ENCODE measurements at regions of chr10 and their contacts with region 1.

Region 1: DNA sequence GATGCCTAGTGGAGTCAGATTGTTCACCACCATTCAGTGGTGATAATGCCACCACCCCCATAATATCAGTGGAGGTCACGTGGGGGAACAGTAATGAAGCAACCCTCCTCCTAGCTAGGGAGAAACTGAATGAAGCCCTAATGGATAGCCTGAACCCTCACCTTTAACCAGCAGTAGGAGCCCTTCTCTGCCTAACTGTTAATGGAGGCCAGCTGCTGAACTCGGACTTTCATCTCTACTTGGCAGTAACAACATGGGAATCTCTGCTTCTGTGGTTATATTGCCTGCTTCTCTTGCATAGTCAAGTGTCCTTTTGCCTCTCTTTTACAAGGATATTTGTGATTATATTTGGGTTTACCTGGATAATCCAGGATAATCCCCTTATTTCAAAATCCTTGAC is 1097.9 kb downstream of the REEP3 start:
- DNase-seq: no peak
- H3K4me3 Mint-ChIP-seq: no peak overlapping the region
- H3K27ac Mint-ChIP-seq: no peak overlapping the region
- H3K4me1 Mint-ChIP-seq: peaks cover 46% of the 10 kb centered on the region
- H3K27me3 Mint-ChIP-seq: no peaks in the 10 kb centered on the region
- CTCF ChIP-seq: no peak

Region 2: DNA sequence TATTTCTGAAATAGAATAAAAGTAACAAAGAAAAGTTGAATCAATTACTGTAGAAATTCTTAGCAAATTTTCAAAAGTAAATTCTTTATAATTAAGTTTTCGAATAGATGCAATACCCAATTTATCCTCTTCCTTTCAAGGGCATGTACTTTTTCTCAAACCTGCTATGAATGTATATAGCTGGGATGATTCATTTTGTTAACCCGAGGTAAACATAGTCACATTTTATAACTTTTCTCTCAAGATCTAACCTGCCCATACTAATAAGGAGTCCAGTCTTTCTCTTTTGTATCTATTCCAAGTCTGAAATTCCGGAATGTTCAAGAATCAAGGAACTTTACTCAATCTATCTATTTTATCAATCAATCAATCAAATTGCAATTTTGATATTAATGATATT is 25.0 kb before region 1 on chr10:
- CTCF ChIA-PET with region 1: no interaction called
- intact Hi-C with region 1: no loop called
- DNase-seq: no peak
- H3K4me3 Mint-ChIP-seq: no peak overlapping the region
- H3K27ac Mint-ChIP-seq: no peak overlapping the region
- H3K4me1 Mint-ChIP-seq: no peaks in the 10 kb centered on the region
- H3K27me3 Mint-ChIP-seq: no peaks in the 10 kb centered on the region
- CTCF ChIP-seq: no peak

Region 3: DNA sequence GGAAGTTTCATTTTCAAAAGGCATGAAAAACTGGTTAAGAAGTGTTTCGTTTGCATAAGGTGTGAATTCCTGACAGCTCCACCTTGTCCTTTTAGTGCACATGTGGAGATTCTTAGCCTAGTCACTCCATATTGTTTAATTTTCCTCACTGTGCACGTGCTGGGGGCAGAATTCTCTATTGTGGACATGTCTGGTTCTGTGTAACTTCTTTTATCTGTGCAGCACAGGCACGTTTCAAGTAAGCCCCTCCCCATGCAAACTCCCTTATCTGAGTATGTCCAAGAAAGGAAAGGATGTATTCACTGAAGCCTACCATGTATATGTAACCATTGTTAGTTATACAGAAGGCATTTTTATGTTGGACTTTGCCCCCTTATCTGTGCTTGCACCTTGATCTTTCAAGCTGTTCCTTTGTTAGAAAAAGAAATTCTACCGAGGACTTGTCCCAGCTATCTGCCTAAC is 248.4 kb after region 1 on chr10:
- CTCF ChIA-PET with region 1: no interaction called
- intact Hi-C with region 1: loop called (anchors 1 kb)
- DNase-seq: peak; percentile 8
- H3K4me3 Mint-ChIP-seq: peak overlapping the region; percentile 22
- H3K27ac Mint-ChIP-seq: peak overlapping the region; percentile 52
- H3K4me1 Mint-ChIP-seq: peaks cover 21% of the 10 kb centered on the region
- H3K27me3 Mint-ChIP-seq: no peaks in the 10 kb centered on the region
- CTCF ChIP-seq: no peak

Measured in Calu3 (cell line).